ENCODE measurements at regions of chr6 and their contacts with region 1.

Region 1: DNA sequence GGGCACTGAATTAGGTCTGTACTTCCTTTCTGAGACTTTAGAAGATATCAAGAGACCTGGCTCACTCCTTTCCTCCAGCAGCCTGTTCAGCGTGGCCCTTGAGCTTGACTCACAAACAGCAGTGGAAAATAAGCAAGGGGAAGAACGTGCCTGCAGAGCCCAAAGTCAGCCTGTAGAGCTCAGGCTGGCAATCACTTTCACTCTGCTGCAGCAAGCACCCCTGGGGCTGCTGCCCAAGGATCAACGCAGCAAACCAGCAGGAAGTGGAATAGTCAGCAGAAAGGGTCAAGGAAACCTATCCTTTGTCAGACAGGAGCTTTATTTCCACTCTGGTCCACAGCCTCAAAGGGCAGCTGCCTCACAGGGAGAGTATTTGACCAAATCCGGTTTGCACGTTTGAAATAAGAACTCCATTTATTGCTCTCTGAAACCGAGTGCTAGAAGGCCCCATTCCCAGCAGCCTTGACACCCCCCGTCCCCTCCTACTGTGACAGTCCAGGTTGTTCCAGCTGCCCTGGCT is 77.4 kb downstream of the PRDM1 start:
- DNase-seq: peak; percentile 80
- H3K4me3 Mint-ChIP-seq: peak overlapping the region; percentile 64
- H3K27ac Mint-ChIP-seq: peak overlapping the region; percentile 91
- H3K4me1 Mint-ChIP-seq: peaks cover 60% of the 10 kb centered on the region
- H3K27me3 Mint-ChIP-seq: no peaks in the 10 kb centered on the region

Region 2: DNA sequence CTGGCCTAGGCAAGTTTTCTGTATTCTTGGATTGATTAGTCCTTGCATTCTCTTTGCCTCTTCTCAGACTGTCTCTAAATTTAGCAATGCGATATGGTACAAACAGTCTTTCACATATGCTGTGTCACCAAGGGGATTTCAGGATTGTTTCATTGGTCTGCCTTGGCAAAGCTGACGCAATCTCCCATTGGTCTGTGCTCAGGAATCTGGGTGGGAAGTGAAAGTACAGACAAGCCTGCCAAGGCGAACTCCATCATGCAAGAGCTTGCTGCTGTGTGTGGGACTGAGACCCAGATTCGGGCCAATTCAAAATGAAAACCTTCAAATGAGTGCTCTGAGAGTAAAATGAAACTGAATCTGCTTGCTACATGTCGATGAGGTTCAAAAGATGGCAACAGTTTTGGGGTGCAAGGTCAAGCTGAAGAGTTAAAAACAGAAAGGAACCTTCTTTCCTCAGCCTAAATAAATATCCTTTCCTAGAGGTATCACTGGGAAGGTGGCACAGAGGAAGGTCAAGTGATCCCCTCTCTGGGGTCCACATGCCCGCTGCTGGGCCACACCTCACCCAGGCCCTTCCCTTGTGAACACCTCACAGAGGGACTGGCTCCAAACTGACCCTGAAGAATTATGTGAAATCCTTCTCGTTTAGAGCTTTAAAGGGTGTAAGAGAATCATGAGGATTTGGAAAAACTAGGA is 561.8 kb before region 1 on chr6:
- CTCF ChIA-PET with region 1: no interaction called
- POLR2A ChIA-PET with region 1: no interaction called
- intact Hi-C with region 1: loop called (anchors 1 kb)
- DNase-seq: peak; percentile 86
- H3K4me3 Mint-ChIP-seq: peak overlapping the region; percentile 33
- H3K27ac Mint-ChIP-seq: peak overlapping the region; percentile 86
- H3K4me1 Mint-ChIP-seq: peaks cover 26% of the 10 kb centered on the region
- H3K27me3 Mint-ChIP-seq: peaks cover 3% of the 10 kb centered on the region

Region 3: DNA sequence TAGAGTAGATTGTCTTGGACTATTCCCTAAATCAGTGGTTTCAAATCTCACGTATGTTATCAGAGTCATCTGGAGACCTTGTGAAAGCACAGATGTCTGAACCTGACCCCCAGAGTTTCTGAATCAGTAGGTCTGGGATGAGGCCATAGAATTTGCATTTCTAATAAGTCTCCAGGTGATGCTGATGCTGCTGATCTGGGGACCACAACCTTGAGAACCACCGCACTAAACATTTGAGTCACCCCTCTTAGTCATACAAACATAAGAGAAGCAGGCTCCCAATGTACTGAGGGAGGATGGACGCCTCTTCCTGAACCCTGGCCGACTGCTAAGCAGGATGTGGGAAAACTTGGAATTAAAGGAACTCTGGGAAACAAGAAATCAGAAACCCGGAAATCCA is 265.2 kb before region 1 on chr6:
- CTCF ChIA-PET with region 1: no interaction called
- POLR2A ChIA-PET with region 1: interaction called, 4 read pairs
- intact Hi-C with region 1: loop called (anchors 1 kb)
- DNase-seq: peak; percentile 67
- H3K4me3 Mint-ChIP-seq: no peak overlapping the region
- H3K27ac Mint-ChIP-seq: no peak overlapping the region
- H3K4me1 Mint-ChIP-seq: peaks cover 14% of the 10 kb centered on the region
- H3K27me3 Mint-ChIP-seq: peaks cover 9% of the 10 kb centered on the region

Region 4: GRCh38 chr6:106085984-106086813 is 77.3 kb before region 1 on chr6 and contains the start of gene PRDM1:
- CTCF ChIA-PET with region 1: no interaction called
- POLR2A ChIA-PET with region 1: interaction called, 8 read pairs
- intact Hi-C with region 1: loop called (anchors 1 kb)
- DNase-seq: peak; percentile 89
- H3K4me3 Mint-ChIP-seq: peak within 1 kb of the TSS; percentile 90
- H3K27ac Mint-ChIP-seq: peak within 1 kb of the TSS; percentile 94
- H3K4me1 Mint-ChIP-seq: peaks cover 73% of the 10 kb centered on the region
- H3K27me3 Mint-ChIP-seq: peaks cover 2% of the 10 kb centered on the region
- total RNA-seq, gene PRDM1: 70.9 to 78.9 TPM

Region 5: GRCh38 chr6:106114492-106115265 is 48.8 kb before region 1 on chr6:
- CTCF ChIA-PET with region 1: interaction called, 14 read pairs
- POLR2A ChIA-PET with region 1: interaction called, 14 read pairs
- intact Hi-C with region 1: loop called (anchors 1 kb)
- DNase-seq: peak; percentile 92
- H3K4me3 Mint-ChIP-seq: peak overlapping the region; percentile 25
- H3K27ac Mint-ChIP-seq: peak overlapping the region; percentile 75
- H3K4me1 Mint-ChIP-seq: peaks cover 92% of the 10 kb centered on the region
- H3K27me3 Mint-ChIP-seq: peaks cover 8% of the 10 kb centered on the region

Region 6: GRCh38 chr6:106134087-106134781 is 29.3 kb before region 1 on chr6:
- CTCF ChIA-PET with region 1: no interaction called
- POLR2A ChIA-PET with region 1: no interaction called
- intact Hi-C with region 1: no loop called
- DNase-seq: no peak
- H3K4me3 Mint-ChIP-seq: no peak overlapping the region
- H3K27ac Mint-ChIP-seq: no peak overlapping the region
- H3K4me1 Mint-ChIP-seq: peaks cover 13% of the 10 kb centered on the region
- H3K27me3 Mint-ChIP-seq: no peaks in the 10 kb centered on the region

Region 7: DNA sequence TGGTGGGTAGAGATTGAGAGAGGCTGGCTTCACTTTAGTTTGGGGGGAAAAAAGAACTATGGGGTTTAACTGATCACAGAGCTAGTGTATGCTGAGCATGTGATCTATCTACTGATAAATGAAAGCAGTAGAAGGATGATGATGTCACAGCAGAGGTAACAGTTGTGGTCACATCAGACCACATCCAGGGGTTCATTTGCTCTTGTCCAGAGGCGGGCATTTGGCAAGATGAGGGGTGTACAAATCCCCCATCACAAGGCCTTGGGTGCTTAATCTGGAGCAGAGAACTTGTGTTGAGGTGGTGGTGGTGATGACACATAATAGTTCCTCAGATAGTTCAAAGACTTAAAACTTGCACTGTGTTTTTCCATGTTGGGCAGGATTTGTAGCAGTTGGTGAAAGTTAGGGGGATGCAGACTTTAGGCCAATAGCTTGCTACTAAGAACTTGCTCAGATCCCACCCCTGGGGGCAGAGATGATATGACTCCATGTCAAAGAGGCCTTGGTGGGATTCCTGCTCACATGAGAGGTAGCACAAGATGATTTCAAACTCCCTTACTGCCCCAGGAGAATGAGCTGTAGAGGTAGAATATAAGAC is 13.9 kb before region 1 on chr6:
- CTCF ChIA-PET with region 1: interaction called, 5 read pairs
- POLR2A ChIA-PET with region 1: interaction called, 7 read pairs
- intact Hi-C with region 1: loop called (anchors 1 kb)
- DNase-seq: peak; percentile 51
- H3K4me3 Mint-ChIP-seq: no peak overlapping the region
- H3K27ac Mint-ChIP-seq: peak overlapping the region; percentile 26
- H3K4me1 Mint-ChIP-seq: peaks cover 48% of the 10 kb centered on the region
- H3K27me3 Mint-ChIP-seq: no peaks in the 10 kb centered on the region

Region 8: DNA sequence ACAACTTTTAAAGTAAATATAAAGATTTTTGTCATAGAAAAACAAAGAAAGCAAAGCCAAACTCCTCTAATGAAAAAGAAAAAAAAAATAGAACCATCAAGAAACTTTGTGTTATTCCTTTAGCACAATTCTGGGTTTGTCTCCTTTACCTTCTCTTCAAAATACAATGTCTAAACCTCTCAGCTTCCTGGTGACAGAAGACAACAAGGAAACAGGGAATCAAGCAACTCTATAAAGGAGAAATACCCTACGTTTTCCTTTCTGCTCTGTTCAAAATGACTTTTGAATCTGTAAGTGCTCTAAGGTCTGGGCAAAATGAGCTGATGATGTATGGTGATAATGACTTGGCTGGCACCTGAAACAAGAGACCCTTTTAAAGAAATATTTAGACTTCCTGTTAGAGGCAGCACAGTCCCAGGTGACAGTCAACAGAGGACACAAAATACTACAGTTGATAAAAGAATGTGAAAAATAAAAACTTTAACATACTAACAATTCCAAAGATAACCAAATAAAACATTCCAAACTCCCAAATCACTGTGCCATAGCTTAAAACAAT is 24.0 kb after region 1 on chr6:
- CTCF ChIA-PET with region 1: interaction called, 15 read pairs
- POLR2A ChIA-PET with region 1: interaction called, 72 read pairs
- intact Hi-C with region 1: loop called (anchors 1 kb)
- DNase-seq: no peak
- H3K4me3 Mint-ChIP-seq: no peak overlapping the region
- H3K27ac Mint-ChIP-seq: peak overlapping the region; percentile 53
- H3K4me1 Mint-ChIP-seq: peaks cover 70% of the 10 kb centered on the region
- H3K27me3 Mint-ChIP-seq: no peaks in the 10 kb centered on the region

Measured in activated CD4-positive, alpha-beta memory T cell treated with anti-CD3 and anti-CD28 coated beads for 36 hours (primary cell).